Colonic mucosa (tissue), 4 donors: ENCODE measurements at regions of chr14 and their contacts with region 1.

Region 1: DNA sequence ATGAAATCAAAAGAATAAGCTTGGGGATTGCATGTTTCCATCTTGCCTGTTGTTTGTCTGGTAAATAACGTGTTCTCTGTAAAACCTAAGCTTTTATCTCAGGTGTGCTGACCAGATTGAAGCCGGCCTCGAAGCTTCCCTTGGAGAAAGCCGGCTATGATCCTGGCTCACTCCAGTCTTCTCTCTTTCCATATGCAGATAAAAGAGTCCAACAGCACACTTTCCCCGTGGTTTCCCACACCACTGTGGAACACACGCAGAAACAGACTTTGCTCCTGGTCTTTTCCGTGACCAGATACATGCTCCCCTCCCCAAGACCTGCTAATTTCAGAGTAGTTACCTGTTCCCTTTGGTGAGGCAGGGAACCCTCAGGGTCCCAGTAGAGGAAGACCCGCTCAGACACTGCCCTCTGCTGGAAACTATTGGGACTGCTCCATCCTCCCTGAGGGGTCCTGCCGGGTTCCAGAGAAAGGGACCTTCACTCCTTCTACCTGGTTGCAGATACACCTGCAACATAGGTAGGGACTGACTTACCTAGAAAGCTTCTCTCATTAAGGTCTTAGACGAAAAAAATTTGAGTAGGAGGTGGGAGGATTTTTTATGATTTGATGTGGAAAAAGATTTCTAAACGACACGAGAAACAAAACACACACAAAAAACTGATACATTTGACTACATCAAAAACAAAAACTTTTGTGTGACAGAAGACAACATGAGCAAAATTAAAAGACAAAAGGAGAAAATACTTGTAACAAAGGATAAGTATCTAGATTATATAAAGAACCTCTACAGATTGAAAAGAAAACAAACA is 415.5 kb upstream of the CCDC196 start:
- DNase-seq: peak; percentile 70
- H3K4me3 ChIP-seq: no peak overlapping the region
- H3K27ac ChIP-seq: no peak overlapping the region
- H3K4me1 ChIP-seq: no peaks in the 10 kb centered on the region
- H3K27me3 ChIP-seq: no peaks in the 10 kb centered on the region
- CTCF ChIP-seq: peak; percentile 84

Region 2: GRCh38 chr14:65164068-65164824 is 906.5 kb before region 1 on chr14:
- intact Hi-C with region 1: loop called (anchors 5 kb)
- DNase-seq: peak; percentile 34
- H3K4me3 ChIP-seq: no peak overlapping the region
- H3K27ac ChIP-seq: no peak overlapping the region
- H3K4me1 ChIP-seq: no peaks in the 10 kb centered on the region
- H3K27me3 ChIP-seq: no peaks in the 10 kb centered on the region
- CTCF ChIP-seq: peak; percentile 43

Region 3: DNA sequence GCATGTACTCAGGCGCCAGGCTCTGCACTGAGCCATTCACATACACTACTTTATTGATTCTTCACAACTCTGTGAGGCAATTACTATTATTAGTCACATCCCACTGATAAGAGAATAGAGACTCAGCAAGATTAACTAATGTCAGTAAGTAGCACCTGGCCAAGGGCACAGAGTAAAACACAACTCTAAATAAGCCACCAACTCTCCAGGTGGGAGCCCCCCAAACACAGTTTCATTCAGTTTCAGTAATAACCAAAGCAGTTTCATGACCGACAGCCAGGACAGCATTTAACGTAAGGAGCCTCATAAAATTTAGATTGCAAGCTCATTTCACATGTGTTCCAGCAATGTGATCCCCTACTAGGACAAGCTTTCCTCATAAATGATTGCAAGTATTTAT is 92.3 kb after region 1 on chr14:
- intact Hi-C with region 1: no loop called
- DNase-seq: no peak
- H3K4me3 ChIP-seq: no peak overlapping the region
- H3K27ac ChIP-seq: no peak overlapping the region
- H3K4me1 ChIP-seq: no peaks in the 10 kb centered on the region
- H3K27me3 ChIP-seq: no peaks in the 10 kb centered on the region
- CTCF ChIP-seq: no peak